Spleen (tissue), 13 donors: ENCODE measurements at regions of chr11 and their contacts with region 1.

Region 1: GRCh38 chr11:3037040-3037944 is 19.9 kb downstream of the CARS1 start:
- DNase-seq: peak; percentile 86
- H3K4me3 ChIP-seq: no peak overlapping the region
- H3K27ac ChIP-seq: peak overlapping the region in 4 of 8 donors; percentile 22 to 56 (median 54)
- H3K4me1 ChIP-seq: peaks cover 10 to 38% (median 30%) of the 10 kb centered on the region in 6 donors
- H3K27me3 ChIP-seq: no peaks in the 10 kb centered on the region
- CTCF ChIP-seq: peak in 9 of 11 experiments; percentile 39 to 73 (median 60)
- POLR2A ChIP-seq: no peak

Region 2: DNA sequence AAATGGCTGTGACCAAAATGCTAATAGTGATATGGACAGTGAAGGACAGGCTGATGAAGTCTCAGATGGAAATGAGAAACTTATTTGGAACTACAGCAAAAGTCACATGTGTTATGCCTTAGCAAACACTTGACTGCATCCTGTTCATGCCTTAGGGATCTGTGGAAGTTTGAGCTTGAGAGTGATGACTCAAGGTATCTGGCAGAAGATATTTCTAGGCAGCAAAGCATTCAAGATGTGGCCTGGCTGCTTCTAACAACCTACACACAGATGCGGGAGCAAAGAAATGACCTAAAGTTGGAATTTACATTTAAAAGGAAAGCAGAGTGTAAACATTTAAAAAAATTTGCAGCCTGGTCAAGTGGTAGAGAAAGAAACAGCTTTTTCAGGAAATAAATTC is 688.3 kb before region 1 on chr11:
- intact Hi-C with region 1: no loop called
- DNase-seq: no peak
- H3K4me3 ChIP-seq: no peak overlapping the region
- H3K27ac ChIP-seq: no peak overlapping the region
- H3K4me1 ChIP-seq: no peaks in the 10 kb centered on the region
- H3K27me3 ChIP-seq: no peaks in the 10 kb centered on the region
- CTCF ChIP-seq: no peak
- POLR2A ChIP-seq: no peak

Region 3: GRCh38 chr11:2870969-2871680 is 166.2 kb before region 1 on chr11:
- intact Hi-C with region 1: no loop called
- DNase-seq: no peak
- H3K4me3 ChIP-seq: no peak overlapping the region
- H3K27ac ChIP-seq: peak overlapping the region in 1 of 8 donors; percentile 18
- H3K4me1 ChIP-seq: peaks cover 0 to 44% (median 18%) of the 10 kb centered on the region in 6 donors
- H3K27me3 ChIP-seq: peaks cover 0 to 67% (median 31%) of the 10 kb centered on the region in 7 donors
- CTCF ChIP-seq: no peak
- POLR2A ChIP-seq: no peak

Region 4: GRCh38 chr11:3091791-3092602 is 54.7 kb after region 1 on chr11:
- intact Hi-C with region 1: loop called (anchors 5 kb)
- DNase-seq: peak; percentile 93
- H3K4me3 ChIP-seq: no peak overlapping the region
- H3K27ac ChIP-seq: no peak overlapping the region
- H3K4me1 ChIP-seq: peaks cover 4 to 52% (median 22%) of the 10 kb centered on the region in 6 donors
- H3K27me3 ChIP-seq: peaks cover 0 to 4% (median 0%) of the 10 kb centered on the region in 7 donors
- CTCF ChIP-seq: peak; percentile 93 to 99 (median 99)
- POLR2A ChIP-seq: no peak

Region 5: GRCh38 chr11:3217676-3218482 is 180.6 kb after region 1 on chr11:
- intact Hi-C with region 1: loop called (anchors 5 kb)
- DNase-seq: peak; percentile 71
- H3K4me3 ChIP-seq: no peak overlapping the region
- H3K27ac ChIP-seq: no peak overlapping the region
- H3K4me1 ChIP-seq: peaks cover 0 to 14% (median under 1%) of the 10 kb centered on the region in 6 donors
- H3K27me3 ChIP-seq: peaks cover 0 to 77% (median 8%) of the 10 kb centered on the region in 7 donors
- CTCF ChIP-seq: no peak
- POLR2A ChIP-seq: no peak

Region 6: DNA sequence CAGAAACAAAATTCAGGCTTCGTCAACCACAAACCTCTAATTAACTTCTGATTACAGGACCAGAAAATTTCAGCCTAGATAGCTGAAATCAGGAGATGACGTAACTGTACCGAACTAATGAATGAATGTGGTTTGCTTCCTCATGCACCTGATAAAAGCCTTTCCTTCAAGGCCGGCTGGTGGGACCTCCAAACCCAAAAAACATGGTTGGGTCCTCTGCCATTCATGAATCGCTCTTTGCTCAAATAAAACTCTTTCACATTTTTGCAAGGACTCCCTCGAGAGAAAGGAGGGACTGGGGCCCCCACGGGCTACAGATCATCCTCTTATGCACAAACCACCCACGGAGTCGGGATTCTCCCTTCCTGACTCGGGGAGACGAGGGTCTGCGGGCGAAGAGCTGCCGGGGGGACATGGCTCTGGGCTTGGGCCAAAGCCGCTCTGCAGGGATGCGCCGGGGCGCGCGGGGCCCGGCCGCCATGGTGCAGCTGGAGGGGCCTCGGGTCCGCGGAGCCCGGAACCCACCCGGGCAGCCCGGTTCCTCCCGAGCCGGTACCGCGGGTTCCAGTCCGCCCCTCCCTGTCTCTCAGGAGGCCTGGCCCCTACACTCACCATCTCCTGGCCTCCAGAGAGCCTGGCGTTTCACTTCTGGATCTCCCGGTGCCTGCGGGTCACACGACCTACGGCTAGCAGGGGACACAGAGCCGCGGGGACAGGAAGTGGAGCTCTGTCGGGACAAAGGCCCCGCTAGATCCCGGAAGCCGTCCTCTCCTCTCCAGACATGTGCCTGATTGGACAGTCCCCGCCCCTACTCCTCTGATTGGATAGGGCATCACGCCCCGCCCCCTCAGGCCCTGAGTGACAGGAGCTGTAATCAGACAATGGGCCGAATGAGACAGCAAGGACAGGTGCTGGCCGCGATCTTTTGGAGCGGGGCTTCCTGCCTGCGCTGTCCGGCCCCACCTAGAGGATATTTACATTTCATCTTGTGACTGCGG is 341.4 kb after region 1 on chr11 and contains the start of gene ZNF195:
- intact Hi-C with region 1: no loop called
- DNase-seq: peak; percentile 98
- H3K4me3 ChIP-seq: peak within 1 kb of the TSS; percentile 86 to 99 (median 94)
- H3K27ac ChIP-seq: peak within 1 kb of the TSS; percentile 83 to 94 (median 90)
- H3K4me1 ChIP-seq: peaks cover 12 to 58% (median 38%) of the 10 kb centered on the region in 6 donors
- H3K27me3 ChIP-seq: no peaks in the 10 kb centered on the region
- CTCF ChIP-seq: no peak
- POLR2A ChIP-seq: peak in 1 of 3 donors; percentile 8
- total RNA-seq, gene ZNF195: 26.8 to 39.8 (median 31.6) TPM